PC-9 (cell line): ENCODE measurements at regions of chr14 and their contacts with region 1.

Region 1: DNA sequence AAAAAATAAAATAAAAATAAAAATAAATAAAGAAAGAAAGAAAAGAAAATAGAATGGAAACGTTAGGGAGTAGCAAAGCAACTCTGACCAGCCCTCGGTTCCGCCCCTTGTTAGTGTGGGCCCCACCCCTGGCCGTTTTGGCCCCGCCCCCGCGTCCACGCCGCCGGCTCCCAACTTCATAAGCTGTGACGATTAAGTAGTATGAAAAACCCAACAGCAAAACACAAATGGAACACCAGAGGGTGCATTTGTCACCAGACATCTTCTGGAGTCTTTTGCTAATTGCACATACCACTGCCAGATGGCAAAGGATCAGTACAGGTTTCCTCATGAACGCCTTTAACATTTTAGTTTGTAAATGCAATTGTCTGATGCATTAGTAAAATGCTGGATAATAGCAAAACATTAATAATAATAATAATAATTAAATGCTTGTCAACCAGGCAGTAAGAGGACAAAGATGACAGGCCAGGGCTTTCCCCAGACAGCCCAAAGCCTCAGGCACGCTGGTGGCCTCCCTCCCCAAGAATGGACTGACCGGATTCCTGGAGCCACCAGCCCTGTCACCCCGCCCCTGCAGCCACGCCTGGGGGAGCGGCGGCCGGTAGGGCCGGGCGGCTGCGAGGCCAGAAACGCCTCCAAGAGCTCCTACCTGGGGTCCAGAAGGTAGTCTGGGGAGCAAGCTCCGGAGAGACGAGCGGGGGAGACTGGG is 23.6 kb downstream of the HSP90AA1 start:
- DNase-seq: peak; percentile 95 to 97
- H3K4me3 ChIP-seq: peak overlapping the region; percentile 48
- H3K27ac ChIP-seq: peak overlapping the region; percentile 57
- H3K4me1 ChIP-seq: peaks cover 23% of the 10 kb centered on the region
- H3K27me3 ChIP-seq: no peaks in the 10 kb centered on the region
- CTCF ChIP-seq: peak; percentile 88

Region 2: DNA sequence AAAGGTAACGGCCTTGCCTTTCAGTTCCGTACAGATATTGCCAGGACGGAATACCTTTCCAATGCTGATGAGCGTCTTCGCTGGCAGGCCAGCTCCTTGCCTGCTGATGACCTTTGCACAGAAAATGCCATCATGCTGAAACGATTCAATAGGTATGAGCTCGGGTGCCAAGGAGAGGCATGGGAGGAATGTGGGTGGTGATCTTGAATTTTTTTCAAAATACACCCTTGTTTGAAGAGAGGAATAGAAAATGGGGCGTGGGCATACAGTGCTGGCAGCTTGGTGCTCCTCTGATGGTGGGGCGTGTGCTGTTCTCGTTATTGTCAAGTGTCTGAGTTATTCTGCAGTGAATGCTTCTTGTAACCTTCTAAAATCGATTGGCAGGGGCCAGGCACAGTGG is 28.9 kb before region 1 on chr14:
- CTCF ChIA-PET with region 1: interaction called, 7 read pairs
- POLR2A ChIA-PET with region 1: interaction called, 9 read pairs
- intact Hi-C with region 1: loop called (anchors 1 kb)
- DNase-seq: peak; percentile 95 to 99
- H3K4me3 ChIP-seq: no peak overlapping the region
- H3K27ac ChIP-seq: peak overlapping the region; percentile 56
- H3K4me1 ChIP-seq: peaks cover 38% of the 10 kb centered on the region
- H3K27me3 ChIP-seq: no peaks in the 10 kb centered on the region
- CTCF ChIP-seq: no peak

Region 3: DNA sequence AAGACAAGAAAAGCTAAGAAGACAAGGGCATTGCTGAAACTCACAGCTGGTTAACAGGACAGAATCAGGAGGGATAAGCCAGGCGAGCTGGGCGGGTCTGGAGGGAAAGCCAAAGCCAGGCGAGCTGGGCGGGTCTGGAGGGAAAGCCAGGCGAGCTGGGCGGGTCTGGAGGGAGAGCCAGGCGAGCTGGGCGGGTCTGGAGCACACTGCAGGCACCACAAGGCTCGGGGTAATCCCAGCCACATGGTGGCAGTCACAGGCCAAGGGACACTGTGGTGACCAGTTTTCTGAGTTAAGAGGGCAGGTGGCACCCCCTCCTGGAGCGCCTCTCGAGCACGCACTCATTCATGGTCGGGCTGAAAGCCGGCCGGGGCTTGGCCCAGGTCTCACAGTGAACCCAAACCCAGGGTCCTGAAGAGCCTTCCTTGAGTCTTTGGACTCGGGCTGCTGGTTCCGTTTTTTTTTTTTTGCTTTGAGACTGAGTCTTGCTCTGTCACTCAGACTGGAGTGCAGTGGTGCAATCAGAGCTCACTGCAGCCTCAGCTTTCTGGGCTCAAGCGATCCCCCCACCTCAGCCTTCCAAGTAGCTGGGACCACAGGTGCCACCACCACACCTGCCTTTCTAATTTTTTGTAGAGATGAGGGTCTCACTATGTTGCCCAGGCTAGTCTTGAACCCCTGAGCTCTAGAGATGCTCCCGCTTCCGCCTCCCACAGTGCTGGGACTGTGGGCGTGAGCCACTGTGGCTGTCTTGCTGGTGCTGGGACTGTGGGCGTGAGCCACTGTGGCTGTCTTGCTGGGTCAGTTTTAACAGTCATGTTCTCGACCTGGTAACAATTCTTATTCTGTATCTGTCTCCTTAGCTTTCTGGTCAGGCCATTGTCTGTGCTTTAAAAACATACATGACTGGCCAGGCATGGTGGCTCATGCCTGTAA is 16.6 kb before region 1 on chr14:
- CTCF ChIA-PET with region 1: interaction called, 25 read pairs
- POLR2A ChIA-PET with region 1: no interaction called
- intact Hi-C with region 1: no loop called
- DNase-seq: peak; percentile 98 to 100
- H3K4me3 ChIP-seq: no peak overlapping the region
- H3K27ac ChIP-seq: no peak overlapping the region
- H3K4me1 ChIP-seq: peaks cover 3% of the 10 kb centered on the region
- H3K27me3 ChIP-seq: no peaks in the 10 kb centered on the region
- CTCF ChIP-seq: peak; percentile 84

Region 4: DNA sequence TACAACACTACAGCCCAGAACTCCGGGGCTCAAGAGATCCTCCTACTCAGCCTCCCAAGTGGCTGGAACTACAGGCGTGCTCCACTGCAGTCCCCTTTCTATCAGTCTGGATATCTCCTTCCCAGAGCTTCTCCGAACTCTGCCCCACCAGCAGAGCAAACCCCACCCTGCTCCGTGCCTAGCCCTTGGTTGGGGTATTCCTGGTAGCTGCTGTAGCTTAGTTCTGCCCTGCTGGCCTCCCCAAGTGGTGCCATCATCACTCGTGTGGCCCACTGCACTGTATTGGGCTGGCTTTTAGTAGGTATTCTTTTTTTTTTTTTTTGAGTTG is 14.1 kb after region 1 on chr14:
- CTCF ChIA-PET with region 1: interaction called, 8 read pairs
- POLR2A ChIA-PET with region 1: interaction called, 21 read pairs
- intact Hi-C with region 1: no loop called
- DNase-seq: no peak
- H3K4me3 ChIP-seq: no peak overlapping the region
- H3K27ac ChIP-seq: peak overlapping the region; percentile 5; the same call in 1 of the 2 replicates
- H3K4me1 ChIP-seq: peaks cover 25% of the 10 kb centered on the region
- H3K27me3 ChIP-seq: no peaks in the 10 kb centered on the region
- CTCF ChIP-seq: no peak

Region 5: GRCh38 chr14:102139248-102140026 is 76.2 kb after region 1 on chr14 and contains the start of gene WDR20:
- CTCF ChIA-PET with region 1: interaction called, 3 read pairs
- POLR2A ChIA-PET with region 1: interaction called, 6 read pairs
- intact Hi-C with region 1: loop called (anchors 1 kb)
- DNase-seq: peak; percentile 98 to 100
- H3K4me3 ChIP-seq: peak within 1 kb of the TSS; percentile 75
- H3K27ac ChIP-seq: peak within 1 kb of the TSS; percentile 44
- H3K4me1 ChIP-seq: peaks cover 31% of the 10 kb centered on the region
- H3K27me3 ChIP-seq: no peaks in the 10 kb centered on the region
- CTCF ChIP-seq: peak; percentile 19; the same call in 1 of the 2 replicates
- total RNA-seq, gene WDR20: 62.2 and 93.5 TPM in 2 replicates

Region 6: GRCh38 chr14:102157346-102157745 is 94.1 kb after region 1 on chr14:
- CTCF ChIA-PET with region 1: interaction called, 10 read pairs
- POLR2A ChIA-PET with region 1: no interaction called
- intact Hi-C with region 1: no loop called
- DNase-seq: no peak
- H3K4me3 ChIP-seq: no peak overlapping the region
- H3K27ac ChIP-seq: peak overlapping the region; percentile 1; the same call in 1 of the 2 replicates
- H3K4me1 ChIP-seq: no peaks in the 10 kb centered on the region
- H3K27me3 ChIP-seq: no peaks in the 10 kb centered on the region
- CTCF ChIP-seq: no peak

Region 7: DNA sequence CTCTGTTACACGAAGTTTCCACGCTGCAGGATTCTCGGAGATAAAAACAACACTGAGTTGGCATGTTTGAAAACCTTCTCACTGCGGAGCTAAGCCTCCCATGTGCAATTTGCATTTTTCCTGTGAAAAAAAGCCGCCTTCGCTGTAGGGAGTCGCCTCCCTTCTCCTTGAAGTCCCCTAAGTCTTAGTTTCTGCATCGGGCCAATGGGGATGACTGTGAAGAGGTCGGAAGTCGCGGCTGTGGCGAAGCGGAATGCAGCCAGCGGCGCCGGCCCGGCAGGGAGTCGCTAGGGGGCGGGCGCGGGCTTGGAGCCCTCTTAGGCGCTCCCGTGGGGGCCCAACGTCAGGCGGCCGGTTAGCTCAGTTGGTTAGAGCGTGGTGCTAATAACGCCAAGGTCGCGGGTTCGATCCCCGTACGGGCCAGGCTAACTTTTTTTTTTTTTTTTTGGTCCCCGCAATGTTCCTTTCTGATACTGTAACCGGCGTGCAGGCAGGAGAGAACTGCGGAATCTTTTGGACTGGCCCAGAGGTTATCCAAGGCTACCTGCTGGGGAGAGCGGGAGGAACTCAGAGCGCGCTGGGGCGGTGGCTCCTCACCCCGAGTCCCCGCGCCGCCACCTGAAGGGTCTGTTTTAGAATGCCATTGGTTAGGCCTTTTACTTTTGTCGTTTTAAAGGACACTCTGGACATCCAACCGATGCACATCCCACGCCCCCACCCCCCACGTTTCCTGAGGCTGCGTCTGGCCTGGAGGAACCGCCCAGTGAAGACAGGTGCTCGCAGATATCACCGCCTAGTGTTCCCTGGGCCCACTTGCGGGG is 253.7 kb after region 1 on chr14:
- CTCF ChIA-PET with region 1: interaction called, 10 read pairs
- POLR2A ChIA-PET with region 1: no interaction called
- intact Hi-C with region 1: no loop called
- DNase-seq: peak; percentile 85 to 91
- H3K4me3 ChIP-seq: peak overlapping the region; percentile 69
- H3K27ac ChIP-seq: peak overlapping the region; percentile 69
- H3K4me1 ChIP-seq: peaks cover 42% of the 10 kb centered on the region
- H3K27me3 ChIP-seq: no peaks in the 10 kb centered on the region
- CTCF ChIP-seq: peak; percentile 43